Sciatic nerve (tissue), 2 donors: ENCODE measurements at regions of chr20 and their contacts with region 1.

Region 1: GRCh38 chr20:3820048-3820900 is at the start of gene AP5S1:
- DNase-seq: peak; percentile 99
- ATAC-seq: peak; percentile 91
- total RNA-seq, gene AP5S1: 8.4 TPM

Region 2: DNA sequence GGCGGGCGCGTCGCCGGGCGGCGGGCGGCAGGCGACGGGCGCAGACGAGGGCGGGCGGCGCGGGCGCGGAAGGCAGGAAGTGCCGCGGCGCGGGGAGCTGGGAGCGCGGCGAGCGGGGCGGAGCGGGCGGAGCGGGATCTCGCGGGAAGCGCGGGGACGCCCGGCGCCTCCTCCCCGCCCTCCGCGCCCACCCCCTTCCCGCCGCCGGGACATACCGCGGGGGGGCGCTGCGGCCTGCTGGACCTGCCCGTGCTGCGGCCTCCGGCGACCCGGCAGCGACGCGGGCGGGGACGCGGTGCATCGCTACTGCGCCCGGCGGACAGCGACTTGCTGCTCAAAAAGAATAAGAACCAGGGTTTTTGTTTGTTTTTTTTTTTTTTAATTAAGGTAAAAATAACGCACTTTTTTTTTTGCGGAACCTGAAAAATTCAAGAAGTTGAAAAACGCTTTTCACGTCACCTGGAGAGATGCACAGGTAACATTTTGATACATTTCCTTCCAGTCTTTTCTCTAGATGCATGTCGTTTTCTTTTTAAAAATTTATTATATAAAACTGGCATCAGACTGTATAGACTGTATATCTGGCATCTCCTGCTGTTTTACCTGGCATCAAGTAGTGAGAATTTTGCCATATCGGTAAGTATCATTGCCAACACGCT is 33.5 kb before region 1 on chr20 and contains the start of gene CENPB:
- intact Hi-C with region 1: loop called (anchors 2 kb)
- DNase-seq: peak; percentile 94
- ATAC-seq: peak; percentile 88
- total RNA-seq, gene CENPB: 71.0 TPM

Region 3: GRCh38 chr20:3854462-3854871 is 34.2 kb after region 1 on chr20:
- intact Hi-C with region 1: no loop called
- DNase-seq: no peak
- ATAC-seq: peak; percentile 44

Region 4: DNA sequence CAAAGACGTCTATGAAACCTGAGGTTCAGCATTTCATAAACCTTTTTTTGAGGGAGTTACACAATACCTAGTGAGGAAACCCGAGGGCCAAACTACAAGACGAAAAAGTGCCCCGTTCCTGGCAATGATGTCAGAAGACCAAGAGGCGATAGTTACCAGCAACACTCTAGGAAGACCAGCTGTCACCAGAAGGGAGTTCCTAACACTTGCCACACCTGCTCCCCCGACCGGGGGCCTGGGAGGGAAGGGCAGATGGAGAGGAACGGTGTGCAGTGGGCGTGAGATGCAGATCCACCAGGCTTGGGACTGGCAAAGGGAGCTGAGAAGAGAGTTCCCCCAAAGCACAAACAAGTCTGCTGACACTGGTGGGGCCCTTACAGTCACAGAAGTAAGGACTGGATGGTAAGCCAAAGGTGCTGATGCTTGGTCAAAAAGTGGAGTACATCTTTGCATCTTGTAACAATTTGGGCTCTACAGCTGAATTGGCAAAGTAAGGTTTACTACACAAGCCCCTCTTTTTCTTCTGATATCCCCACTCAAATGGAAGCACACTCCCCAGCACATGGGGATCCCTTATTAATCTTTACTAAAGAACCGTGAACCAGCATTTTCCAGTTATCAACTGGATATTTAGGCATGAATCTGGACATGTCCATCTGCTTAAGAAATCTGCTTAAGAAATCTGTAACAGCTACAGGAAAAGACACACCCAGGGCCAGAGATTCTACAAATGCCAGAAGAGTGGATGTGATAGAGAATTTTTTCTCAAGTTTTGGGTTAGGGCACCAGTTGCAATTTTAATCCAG is 107.4 kb after region 1 on chr20:
- intact Hi-C with region 1: no loop called
- DNase-seq: no peak
- ATAC-seq: peak; percentile 12